ENCODE measurements at regions of chr18 and their contacts with region 1.

Region 1: DNA sequence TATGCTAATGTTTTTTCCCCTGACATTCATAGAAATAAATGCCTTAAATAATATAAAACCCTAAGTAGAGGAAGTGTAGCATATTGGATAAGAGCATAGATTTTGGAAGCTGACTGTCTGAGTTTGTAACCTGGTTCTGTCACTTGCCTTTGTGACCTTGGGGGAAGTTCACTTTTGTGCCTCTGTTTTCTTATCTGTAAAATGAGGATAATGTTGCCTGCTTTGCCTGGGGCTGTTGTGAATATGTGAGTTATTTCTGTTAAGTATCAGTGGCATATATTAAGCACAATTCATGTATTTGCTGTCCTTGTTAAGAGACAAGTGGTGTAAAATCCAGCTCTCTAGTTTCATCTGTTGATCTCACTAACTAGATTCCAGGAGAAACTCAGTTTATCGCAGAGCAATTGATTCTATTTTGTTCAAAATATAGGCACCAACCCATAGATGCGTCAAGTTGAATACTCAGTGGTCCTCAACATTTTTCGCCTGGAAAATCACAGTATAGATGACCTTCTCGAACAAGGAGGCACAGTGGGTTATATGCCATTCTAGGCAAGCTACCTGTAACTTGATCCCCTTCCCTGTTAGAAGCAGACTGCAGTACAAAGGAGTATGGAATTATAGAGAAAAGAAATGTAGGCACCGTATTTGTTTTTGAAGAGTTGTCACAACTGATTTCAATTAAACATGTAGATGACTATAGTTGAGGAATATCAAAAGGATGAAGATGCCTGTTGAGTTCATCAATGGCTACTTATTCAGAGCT is 67.0 kb downstream of the SOCS6 start:
- DNase-seq: no peak
- H3K4me3 Mint-ChIP-seq: no peak overlapping the region
- H3K27ac Mint-ChIP-seq: peak overlapping the region; percentile 5
- H3K4me1 Mint-ChIP-seq: peaks cover 33% of the 10 kb centered on the region
- H3K27me3 Mint-ChIP-seq: no peaks in the 10 kb centered on the region
- CTCF ChIP-seq: no peak

Region 2: DNA sequence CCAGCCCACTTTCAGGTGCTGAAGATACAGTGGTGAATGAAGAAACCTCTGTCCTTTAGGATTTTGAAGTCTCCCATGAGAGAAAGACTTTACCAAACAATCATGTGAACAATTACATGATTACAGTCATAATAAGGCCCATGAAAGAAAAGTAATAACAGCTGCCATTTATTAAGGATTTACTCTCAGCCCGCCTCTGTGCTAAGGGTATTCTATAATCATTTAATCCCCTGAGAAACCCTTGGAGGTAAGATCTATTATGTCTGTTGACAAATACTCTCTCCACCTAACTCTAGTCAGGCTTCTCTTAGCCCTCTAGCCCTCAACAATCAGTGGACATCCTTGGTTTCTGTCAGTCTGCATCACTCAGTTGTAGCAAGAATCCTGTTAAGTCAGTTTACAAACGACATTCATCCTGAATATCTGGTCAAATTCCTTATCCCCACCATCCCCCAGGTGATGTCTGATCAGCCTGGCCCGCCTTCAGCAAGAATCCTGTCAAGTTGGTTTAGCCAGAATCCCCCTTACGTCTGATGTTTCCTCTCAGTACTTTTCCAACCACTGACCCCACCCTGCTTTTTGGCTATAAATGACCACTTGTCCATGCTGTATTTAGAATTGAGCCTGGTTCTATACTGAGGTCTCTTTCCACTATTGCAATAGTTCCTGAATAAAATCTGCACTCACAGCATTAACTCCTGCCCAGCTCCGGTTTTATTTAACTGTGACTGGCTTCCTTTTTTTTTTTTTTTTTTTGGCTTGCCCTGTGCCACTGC is 79.2 kb before region 1 on chr18:
- CTCF ChIA-PET with region 1: no interaction called
- intact Hi-C with region 1: no loop called
- DNase-seq: peak; percentile 52
- H3K4me3 Mint-ChIP-seq: no peak overlapping the region
- H3K27ac Mint-ChIP-seq: peak overlapping the region; percentile 68
- H3K4me1 Mint-ChIP-seq: peaks cover 24% of the 10 kb centered on the region
- H3K27me3 Mint-ChIP-seq: no peaks in the 10 kb centered on the region
- CTCF ChIP-seq: no peak

Region 3: GRCh38 chr18:70421471-70422390 is 65.9 kb after region 1 on chr18:
- CTCF ChIA-PET with region 1: interaction called, 3 read pairs
- intact Hi-C with region 1: loop called (anchors 5 kb)
- DNase-seq: peak; percentile 86
- H3K4me3 Mint-ChIP-seq: peak overlapping the region; percentile 46
- H3K27ac Mint-ChIP-seq: peak overlapping the region; percentile 93
- H3K4me1 Mint-ChIP-seq: peaks cover 75% of the 10 kb centered on the region
- H3K27me3 Mint-ChIP-seq: no peaks in the 10 kb centered on the region
- CTCF ChIP-seq: no peak

Region 4: GRCh38 chr18:70659036-70659925 is 303.5 kb after region 1 on chr18:
- CTCF ChIA-PET with region 1: no interaction called
- intact Hi-C with region 1: no loop called
- DNase-seq: no peak
- H3K4me3 Mint-ChIP-seq: no peak overlapping the region
- H3K27ac Mint-ChIP-seq: no peak overlapping the region
- H3K4me1 Mint-ChIP-seq: peaks cover 8% of the 10 kb centered on the region
- H3K27me3 Mint-ChIP-seq: no peaks in the 10 kb centered on the region
- CTCF ChIP-seq: no peak